ENCODE measurements at regions of chr10 and their contacts with region 1.

Region 1: DNA sequence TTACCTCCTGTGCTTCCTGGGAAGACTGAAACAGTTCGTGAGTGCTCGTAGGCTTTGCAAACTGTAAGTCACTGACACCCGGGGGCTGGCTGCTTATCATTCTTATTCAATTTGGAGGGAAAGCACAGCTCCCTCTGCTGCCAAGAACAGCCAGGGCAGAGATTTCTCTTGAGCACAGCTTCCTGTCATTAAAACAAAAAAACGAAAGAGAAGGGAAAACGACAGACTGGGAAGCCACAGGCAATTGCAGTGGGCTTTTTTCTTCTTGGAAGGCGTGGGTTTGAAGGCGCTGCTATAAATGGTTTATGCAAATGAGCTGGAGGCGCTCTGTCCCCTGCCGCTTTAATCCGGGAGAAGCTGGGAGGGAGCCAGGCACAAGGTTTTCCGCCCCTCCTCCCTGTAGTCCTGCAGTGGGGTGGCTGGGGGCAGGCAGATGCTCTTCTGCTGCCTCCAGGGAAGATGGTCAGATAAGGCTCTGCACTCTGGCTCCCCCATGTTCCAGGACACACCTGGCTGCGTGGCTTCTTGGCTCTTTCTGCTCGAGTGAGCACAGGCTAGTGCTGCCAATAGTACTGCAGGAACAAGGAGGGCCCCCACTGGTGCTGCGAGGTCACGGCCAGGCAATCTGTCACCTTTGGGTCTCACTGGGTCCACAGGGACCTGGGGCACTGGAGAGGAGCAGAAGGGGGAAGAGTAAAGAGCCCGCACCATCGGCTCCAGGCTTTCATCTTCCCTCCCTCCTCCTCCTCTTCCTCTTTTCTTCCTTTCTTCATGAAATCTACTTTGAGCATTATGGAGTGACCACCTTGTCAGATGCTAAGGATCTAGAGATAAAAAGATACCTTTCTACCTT is 49.5 kb downstream of the NEURL1 start:
- DNase-seq: no peak
- H3K4me3 ChIP-seq: peak overlapping the region in 2 of 4 experiments; percentile 10 to 44; a peak in 4 of 8 replicates
- H3K27ac ChIP-seq: no peak overlapping the region
- H3K4me1 ChIP-seq: peaks cover 3 to 7% (median 4%) of the 10 kb centered on the region in 4 experiments; a peak in 5 of 7 replicates
- H3K27me3 ChIP-seq: no peaks in the 10 kb centered on the region; a peak in 1 of 7 replicates
- CTCF ChIP-seq: peak; percentile 13 to 55 (median 49)
- EP300 ChIP-seq: peak in 1 of 2 experiments; percentile 3; a peak in 1 of 3 replicates
- POLR2A ChIP-seq: no peak
- RAD21 ChIP-seq: peak in 1 of 2 experiments; percentile 38; a peak in 2 of 4 replicates

Region 2: DNA sequence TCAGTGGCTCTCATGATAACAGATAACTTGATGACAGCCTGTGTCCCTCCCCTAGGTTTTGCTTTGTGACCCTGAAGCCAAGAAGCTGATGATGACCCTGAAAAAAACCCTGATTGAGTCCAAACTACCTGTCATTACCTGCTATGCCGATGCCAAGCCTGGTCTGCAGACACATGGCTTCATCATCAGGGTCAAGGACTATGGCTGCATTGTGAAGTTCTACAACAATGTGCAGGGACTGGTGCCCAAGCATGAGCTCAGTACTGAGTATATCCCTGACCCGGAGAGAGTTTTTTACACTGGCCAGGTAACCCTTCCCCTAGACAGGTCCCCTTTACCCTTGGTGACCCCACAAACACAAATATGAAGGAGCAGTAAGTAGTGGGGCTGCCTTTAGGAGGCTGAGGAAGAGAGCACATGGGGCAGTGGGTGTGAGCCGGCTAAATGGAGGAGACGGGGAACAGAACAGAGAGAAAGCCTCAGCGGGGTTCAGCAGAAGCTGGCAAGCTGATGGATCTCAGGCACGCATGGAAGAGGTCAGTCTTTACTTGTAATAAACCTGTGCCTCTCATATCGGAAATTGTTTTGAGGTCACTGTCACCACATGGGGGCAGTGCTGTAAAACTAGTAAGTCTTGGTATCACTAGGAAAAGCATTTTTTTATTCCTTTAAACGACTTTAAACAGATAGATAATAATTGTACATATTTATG is 126.4 kb before region 1 on chr10:
- CTCF ChIA-PET with region 1: no interaction called
- POLR2A ChIA-PET with region 1: no interaction called
- DNase-seq: no peak
- H3K4me3 ChIP-seq: no peak overlapping the region
- H3K27ac ChIP-seq: no peak overlapping the region
- H3K4me1 ChIP-seq: no peaks in the 10 kb centered on the region
- H3K27me3 ChIP-seq: no peaks in the 10 kb centered on the region
- CTCF ChIP-seq: peak in 2 of 3 experiments; percentile 27 to 44; a peak in 2 of 4 replicates
- EP300 ChIP-seq: no peak
- POLR2A ChIP-seq: no peak
- RAD21 ChIP-seq: peak; percentile 45 to 51

Region 3: GRCh38 chr10:103554488-103555324 is 11.7 kb after region 1 on chr10:
- CTCF ChIA-PET with region 1: interaction called, 10 read pairs
- POLR2A ChIA-PET with region 1: no interaction called
- DNase-seq: peak in 1 of 2 experiments; percentile 64
- H3K4me3 ChIP-seq: peak overlapping the region; percentile 35 to 63 (median 39)
- H3K27ac ChIP-seq: no peak overlapping the region
- H3K4me1 ChIP-seq: peaks cover 0 to 6% (median 0%) of the 10 kb centered on the region in 4 experiments; a peak in 3 of 7 replicates
- H3K27me3 ChIP-seq: peaks cover 0 to 13% (median 10%) of the 10 kb centered on the region in 4 experiments; a peak in 5 of 7 replicates
- CTCF ChIP-seq: no peak
- EP300 ChIP-seq: no peak
- POLR2A ChIP-seq: no peak
- RAD21 ChIP-seq: no peak